ENCODE measurements at regions of chr20 and their contacts with region 1.

Region 1: GRCh38 chr20:53828682-53829254 is 235.1 kb upstream of the ZNF217 start:
- DNase-seq: peak; percentile 84
- H3K4me3 ChIP-seq: peak overlapping the region; percentile 10 to 40 (median 35)
- H3K27ac ChIP-seq: peak overlapping the region; percentile 100
- H3K4me1 ChIP-seq: peaks cover 36% of the 10 kb centered on the region
- H3K27me3 ChIP-seq: no peaks in the 10 kb centered on the region
- CTCF ChIP-seq: peak in 1 of 2 donors; percentile 14

Region 2: GRCh38 chr20:53578492-53579222 is 250.1 kb before region 1 on chr20:
- CTCF ChIA-PET with region 1: no interaction called
- dilution Hi-C with region 1: no loop called
- in situ Hi-C with region 1: no loop called
- intact Hi-C with region 1: loop called (anchors 1 kb)
- DNase-seq: peak; percentile 75
- H3K4me3 ChIP-seq: peak overlapping the region in 1 of 3 experiments; percentile 16
- H3K27ac ChIP-seq: peak overlapping the region; percentile 76
- H3K4me1 ChIP-seq: peaks cover 41% of the 10 kb centered on the region
- H3K27me3 ChIP-seq: no peaks in the 10 kb centered on the region
- CTCF ChIP-seq: peak; percentile 71 to 81

Region 3: GRCh38 chr20:53623454-53624211 is 205.1 kb before region 1 on chr20:
- CTCF ChIA-PET with region 1: no interaction called
- dilution Hi-C with region 1: no loop called
- in situ Hi-C with region 1: no loop called
- intact Hi-C with region 1: loop called (anchors 2 kb)
- DNase-seq: peak; percentile 69
- H3K4me3 ChIP-seq: peak overlapping the region in 1 of 3 experiments; percentile 14
- H3K27ac ChIP-seq: peak overlapping the region; percentile 84
- H3K4me1 ChIP-seq: peaks cover 26% of the 10 kb centered on the region
- H3K27me3 ChIP-seq: no peaks in the 10 kb centered on the region
- CTCF ChIP-seq: no peak

Region 4: DNA sequence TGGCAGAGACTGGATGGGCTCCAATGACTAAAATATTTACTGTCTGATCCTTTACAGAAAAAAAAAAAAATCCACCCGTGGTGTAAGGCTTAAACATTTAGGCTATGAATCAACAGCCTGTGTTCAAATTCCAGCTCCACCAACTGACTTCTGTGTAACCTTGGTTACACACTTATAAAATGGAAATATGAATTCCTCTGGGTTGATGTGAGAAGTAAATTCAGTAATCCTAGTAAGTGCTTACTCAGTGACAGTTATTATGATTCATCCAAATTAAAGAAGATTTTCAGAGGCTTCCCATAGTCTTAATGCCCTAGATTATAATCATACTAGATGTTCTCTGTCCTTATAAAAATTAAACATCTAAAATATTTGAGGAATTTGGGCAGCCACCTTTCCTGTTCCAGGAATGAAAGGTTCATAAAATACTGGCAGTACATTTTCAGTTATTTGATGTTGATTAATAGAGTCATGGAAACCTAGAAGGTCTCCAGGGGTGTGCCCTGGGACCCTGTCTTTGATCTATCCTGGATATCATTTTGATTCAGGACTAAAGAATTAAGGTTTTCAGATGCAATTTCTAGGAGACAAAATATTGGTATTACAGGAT is 54.9 kb before region 1 on chr20:
- CTCF ChIA-PET with region 1: no interaction called
- dilution Hi-C with region 1: no loop called
- in situ Hi-C with region 1: no loop called
- intact Hi-C with region 1: loop called (anchors 1 kb)
- DNase-seq: peak; percentile 94
- H3K4me3 ChIP-seq: peak overlapping the region in 1 of 3 experiments; percentile 27
- H3K27ac ChIP-seq: peak overlapping the region; percentile 100
- H3K4me1 ChIP-seq: peaks cover 25% of the 10 kb centered on the region
- H3K27me3 ChIP-seq: no peaks in the 10 kb centered on the region
- CTCF ChIP-seq: no peak

Region 5: GRCh38 chr20:53805895-53806384 is 22.8 kb before region 1 on chr20:
- CTCF ChIA-PET with region 1: no interaction called
- dilution Hi-C with region 1: no loop called
- in situ Hi-C with region 1: no loop called
- intact Hi-C with region 1: loop called (anchors 1 kb)
- DNase-seq: peak; percentile 88
- H3K4me3 ChIP-seq: no peak overlapping the region
- H3K27ac ChIP-seq: peak overlapping the region; percentile 89
- H3K4me1 ChIP-seq: peaks cover 23% of the 10 kb centered on the region
- H3K27me3 ChIP-seq: no peaks in the 10 kb centered on the region
- CTCF ChIP-seq: no peak

Region 6: DNA sequence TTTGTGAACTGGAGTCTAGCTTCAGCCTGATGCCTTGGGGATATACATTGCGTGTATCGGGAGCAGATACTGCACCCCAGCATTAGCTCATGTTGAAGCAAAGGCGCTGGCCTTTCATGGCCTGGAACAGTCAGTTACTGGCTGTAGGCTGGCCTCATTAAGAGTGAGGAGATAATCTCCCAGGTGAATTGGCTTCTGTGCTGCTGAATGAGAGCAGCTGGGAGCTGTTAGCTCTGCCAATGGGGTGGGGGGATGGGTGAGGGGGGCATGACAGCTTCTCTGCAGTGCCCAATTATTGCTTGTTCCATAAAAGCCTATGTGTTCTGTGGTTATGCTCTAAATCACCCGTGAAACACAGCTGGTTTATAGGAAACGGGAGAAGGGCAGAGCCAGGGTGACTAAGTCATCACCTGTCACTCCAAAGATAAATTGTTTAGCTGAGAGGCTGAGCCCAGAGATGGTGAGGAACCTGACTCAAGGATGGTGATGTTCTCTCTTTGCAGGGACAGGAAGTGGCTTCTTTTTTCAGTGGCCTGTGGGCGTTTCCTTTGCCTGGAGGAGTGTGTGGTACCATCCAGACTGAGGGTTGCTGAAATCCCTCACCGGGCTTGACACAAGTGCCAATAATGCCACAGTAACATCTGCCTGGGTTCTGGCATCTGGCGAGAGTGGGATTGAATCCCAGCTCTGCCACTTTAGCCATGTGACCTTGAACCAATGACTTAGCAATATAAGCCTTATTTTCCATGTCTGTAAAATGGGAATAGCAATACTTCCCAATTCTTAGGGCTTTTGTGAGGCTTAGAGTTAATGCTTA is 70.8 kb after region 1 on chr20:
- CTCF ChIA-PET with region 1: no interaction called
- dilution Hi-C with region 1: loop called (anchors 5 kb)
- in situ Hi-C with region 1: no loop called
- intact Hi-C with region 1: no loop called
- DNase-seq: peak; percentile 96
- H3K4me3 ChIP-seq: no peak overlapping the region
- H3K27ac ChIP-seq: peak overlapping the region; percentile 87
- H3K4me1 ChIP-seq: peaks cover 64% of the 10 kb centered on the region
- H3K27me3 ChIP-seq: no peaks in the 10 kb centered on the region
- CTCF ChIP-seq: no peak

Measured in mammary epithelial cell (primary cell).